Activated CD4-positive, alpha-beta T cell treated with anti-CD3 and anti-CD28 coated beads for 36 hours (primary cell): ENCODE measurements at regions of chrX and their contacts with region 1.

Region 1: GRCh38 chrX:19769467-19769866 is 117.9 kb downstream of the SH3KBP1 start:
- DNase-seq: no peak
- ATAC-seq: peak; percentile 39
- H3K4me3 Mint-ChIP-seq: no peak overlapping the region
- H3K27ac Mint-ChIP-seq: peak overlapping the region; percentile 82
- H3K4me1 Mint-ChIP-seq: peaks cover 68% of the 10 kb centered on the region
- H3K27me3 Mint-ChIP-seq: no peaks in the 10 kb centered on the region

Region 2: DNA sequence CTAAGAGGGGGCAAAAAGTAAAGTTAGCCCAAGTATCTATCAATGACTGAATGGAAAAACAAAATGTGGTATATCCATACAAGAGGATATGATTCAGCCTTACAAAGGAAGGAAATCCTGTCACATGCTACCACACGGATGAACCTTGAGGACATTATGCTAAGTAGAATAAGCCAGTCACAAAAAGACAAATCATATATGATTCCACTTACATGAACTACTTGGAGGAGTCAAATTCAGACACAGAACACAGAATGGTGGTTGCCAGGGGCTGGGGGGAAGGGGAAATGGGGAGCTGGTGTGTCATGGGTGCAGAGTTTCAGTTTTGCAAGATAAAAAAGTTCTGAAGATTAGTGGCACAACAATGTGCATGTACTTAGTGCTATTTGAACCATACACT is 16.2 kb after region 1 on chrX:
- CTCF ChIA-PET with region 1: no interaction called
- POLR2A ChIA-PET with region 1: interaction called, 3 read pairs
- intact Hi-C with region 1: loop called (anchors 2 kb)
- DNase-seq: peak; percentile 79
- ATAC-seq: peak; percentile 97
- H3K4me3 Mint-ChIP-seq: no peak overlapping the region
- H3K27ac Mint-ChIP-seq: peak overlapping the region; percentile 65
- H3K4me1 Mint-ChIP-seq: peaks cover 72% of the 10 kb centered on the region
- H3K27me3 Mint-ChIP-seq: no peaks in the 10 kb centered on the region

Region 3: DNA sequence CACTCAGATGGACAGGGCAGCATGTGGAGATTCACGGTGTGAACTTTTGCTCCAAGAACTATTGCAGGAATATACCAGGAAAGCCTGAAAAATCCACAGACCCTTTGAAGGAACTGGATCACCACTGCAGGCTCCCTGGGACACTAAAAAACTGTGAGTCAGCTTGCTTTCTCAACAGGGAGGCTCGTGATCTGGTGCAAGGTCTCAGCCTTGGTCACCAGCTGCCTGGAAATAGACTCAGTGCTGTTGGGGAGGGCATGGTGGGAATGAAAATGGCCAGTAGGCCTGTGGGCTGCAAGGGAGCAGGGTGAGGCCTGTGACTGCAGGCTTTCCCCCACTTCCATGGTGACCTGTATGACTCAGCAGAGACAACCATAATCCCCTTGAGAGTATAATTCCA is 923.6 kb after region 1 on chrX:
- CTCF ChIA-PET with region 1: no interaction called
- POLR2A ChIA-PET with region 1: no interaction called
- intact Hi-C with region 1: no loop called
- DNase-seq: no peak
- ATAC-seq: no peak
- H3K4me3 Mint-ChIP-seq: no peak overlapping the region
- H3K27ac Mint-ChIP-seq: no peak overlapping the region
- H3K4me1 Mint-ChIP-seq: no peaks in the 10 kb centered on the region
- H3K27me3 Mint-ChIP-seq: peaks cover 6% of the 10 kb centered on the region